ENCODE measurements at regions of chr7 and their contacts with region 1.

Region 1: GRCh38 chr7:91264046-91264923 is at the start of gene FZD1:
- DNase-seq: peak; percentile 98
- H3K4me3 ChIP-seq: peak within 1 kb of the TSS; percentile 60 to 88 (median 75)
- H3K27ac ChIP-seq: peak within 1 kb of the TSS; percentile 89 to 98 (median 97)
- H3K4me1 ChIP-seq: peaks cover 0 to 39% (median 27%) of the 10 kb centered on the region in 4 donors
- H3K27me3 ChIP-seq: no peaks in the 10 kb centered on the region
- CTCF ChIP-seq: no peak
- EP300 ChIP-seq: no peak
- POLR2A ChIP-seq: peak; percentile 44 to 67
- total RNA-seq, gene FZD1: 14.5 to 20.5 (median 16.8) TPM

Region 2: GRCh38 chr7:90455163-90456030 is 808.9 kb before region 1 on chr7:
- intact Hi-C with region 1: loop called (anchors 10 kb)
- DNase-seq: no peak
- H3K4me3 ChIP-seq: peak overlapping the region in 2 of 4 donors; percentile 20 to 31
- H3K27ac ChIP-seq: no peak overlapping the region
- H3K4me1 ChIP-seq: peaks cover 0 to 2% (median 0%) of the 10 kb centered on the region in 4 donors
- H3K27me3 ChIP-seq: no peaks in the 10 kb centered on the region
- CTCF ChIP-seq: peak; percentile 34 to 70 (median 64)
- EP300 ChIP-seq: no peak
- POLR2A ChIP-seq: no peak

Region 3: GRCh38 chr7:91212587-91212986 is 51.7 kb before region 1 on chr7:
- intact Hi-C with region 1: no loop called
- DNase-seq: no peak
- H3K4me3 ChIP-seq: no peak overlapping the region
- H3K27ac ChIP-seq: no peak overlapping the region
- H3K4me1 ChIP-seq: no peaks in the 10 kb centered on the region
- H3K27me3 ChIP-seq: no peaks in the 10 kb centered on the region
- CTCF ChIP-seq: no peak
- EP300 ChIP-seq: no peak
- POLR2A ChIP-seq: no peak

Region 4: GRCh38 chr7:91692800-91693199 is 428.5 kb after region 1 on chr7:
- intact Hi-C with region 1: loop called (anchors 10 kb)
- DNase-seq: no peak
- H3K4me3 ChIP-seq: no peak overlapping the region
- H3K27ac ChIP-seq: peak overlapping the region in 3 of 4 donors; percentile 60 to 69 (median 65)
- H3K4me1 ChIP-seq: peaks cover 0 to 58% (median 42%) of the 10 kb centered on the region in 4 donors
- H3K27me3 ChIP-seq: no peaks in the 10 kb centered on the region
- CTCF ChIP-seq: no peak
- EP300 ChIP-seq: peak in 3 of 4 donors; percentile 14 to 74 (median 48)
- POLR2A ChIP-seq: no peak

Region 5: GRCh38 chr7:91880413-91881241 is 616.3 kb after region 1 on chr7 and contains the start of gene MTERF1:
- intact Hi-C with region 1: loop called (anchors 2 kb)
- DNase-seq: peak; percentile 95
- H3K4me3 ChIP-seq: peak within 1 kb of the TSS; percentile 69 to 85 (median 76)
- H3K27ac ChIP-seq: peak within 1 kb of the TSS; percentile 61 to 73 (median 63)
- H3K4me1 ChIP-seq: peaks cover 0 to 16% (median 12%) of the 10 kb centered on the region in 4 donors
- H3K27me3 ChIP-seq: no peaks in the 10 kb centered on the region
- CTCF ChIP-seq: peak; percentile 90 to 93 (median 93)
- EP300 ChIP-seq: no peak
- POLR2A ChIP-seq: no peak
- total RNA-seq, gene MTERF1: 8.3 to 11.4 (median 9.1) TPM

Measured in sigmoid colon (tissue), 7 donors.